ENCODE measurements at regions of chr10 and their contacts with region 1.

Region 1: DNA sequence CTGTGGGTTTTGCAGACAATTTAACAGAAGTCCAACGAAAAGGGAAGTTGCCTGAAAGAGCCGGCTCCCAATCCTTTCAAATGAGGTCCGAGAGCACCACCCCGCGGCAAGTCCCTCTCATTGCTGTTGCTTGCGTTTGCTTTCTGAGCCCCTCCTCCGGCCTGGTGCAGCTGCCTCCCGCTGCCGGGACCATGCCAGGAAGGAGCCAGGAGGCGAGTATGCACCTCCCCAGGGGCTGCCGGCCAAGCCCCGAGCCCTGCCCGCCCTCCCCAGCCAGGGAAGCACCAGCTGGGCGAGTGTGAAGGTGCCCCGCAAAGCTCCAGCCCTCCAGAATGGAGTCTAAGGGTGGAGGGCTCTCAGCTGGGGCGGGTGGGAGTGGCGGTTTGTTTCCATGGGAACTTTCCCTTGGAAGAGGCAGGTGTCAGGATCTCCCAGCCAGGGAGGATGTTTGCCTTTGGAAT is 25.8 kb upstream of the PPP2R2D start:
- DNase-seq: peak; percentile 80 to 86
- H3K4me3 ChIP-seq: peak overlapping the region; percentile 18; the same call in 1 of the 2 replicates
- H3K4me3 Mint-ChIP-seq: no peak overlapping the region
- H3K27ac Mint-ChIP-seq: no peak overlapping the region
- H3K4me1 ChIP-seq: no peaks in the 10 kb centered on the region
- H3K4me1 Mint-ChIP-seq: peaks cover 5% of the 10 kb centered on the region
- H3K27me3 ChIP-seq: no peaks in the 10 kb centered on the region
- H3K27me3 Mint-ChIP-seq: peaks cover 18% of the 10 kb centered on the region
- CTCF ChIP-seq: peak; percentile 92 to 94

Region 2: GRCh38 chr10:130190055-130190736 is 1684.8 kb before region 1 on chr10:
- CTCF ChIA-PET with region 1: interaction called, 3 read pairs
- POLR2A ChIA-PET with region 1: no interaction called
- intact Hi-C with region 1: loop called (anchors 1 kb)
- DNase-seq: peak; percentile 84 to 94
- H3K4me3 ChIP-seq: peak overlapping the region; percentile 86
- H3K4me3 Mint-ChIP-seq: peak overlapping the region; percentile 60
- H3K27ac Mint-ChIP-seq: no peak overlapping the region
- H3K4me1 ChIP-seq: no peaks in the 10 kb centered on the region
- H3K4me1 Mint-ChIP-seq: no peaks in the 10 kb centered on the region
- H3K27me3 ChIP-seq: no peaks in the 10 kb centered on the region
- H3K27me3 Mint-ChIP-seq: no peaks in the 10 kb centered on the region
- CTCF ChIP-seq: peak; percentile 92 to 99

Region 3: GRCh38 chr10:131453594-131454355 is 421.2 kb before region 1 on chr10:
- CTCF ChIA-PET with region 1: no interaction called
- POLR2A ChIA-PET with region 1: no interaction called
- intact Hi-C with region 1: loop called (anchors 10 kb)
- DNase-seq: peak in 1 of 2 experiments; percentile 29
- H3K4me3 ChIP-seq: no peak overlapping the region
- H3K4me3 Mint-ChIP-seq: no peak overlapping the region
- H3K27ac Mint-ChIP-seq: no peak overlapping the region
- H3K4me1 ChIP-seq: no peaks in the 10 kb centered on the region
- H3K4me1 Mint-ChIP-seq: no peaks in the 10 kb centered on the region
- H3K27me3 ChIP-seq: no peaks in the 10 kb centered on the region; the same call in 1 of the 2 replicates
- H3K27me3 Mint-ChIP-seq: peaks cover 12% of the 10 kb centered on the region
- CTCF ChIP-seq: peak; percentile 11 to 68

Region 4: DNA sequence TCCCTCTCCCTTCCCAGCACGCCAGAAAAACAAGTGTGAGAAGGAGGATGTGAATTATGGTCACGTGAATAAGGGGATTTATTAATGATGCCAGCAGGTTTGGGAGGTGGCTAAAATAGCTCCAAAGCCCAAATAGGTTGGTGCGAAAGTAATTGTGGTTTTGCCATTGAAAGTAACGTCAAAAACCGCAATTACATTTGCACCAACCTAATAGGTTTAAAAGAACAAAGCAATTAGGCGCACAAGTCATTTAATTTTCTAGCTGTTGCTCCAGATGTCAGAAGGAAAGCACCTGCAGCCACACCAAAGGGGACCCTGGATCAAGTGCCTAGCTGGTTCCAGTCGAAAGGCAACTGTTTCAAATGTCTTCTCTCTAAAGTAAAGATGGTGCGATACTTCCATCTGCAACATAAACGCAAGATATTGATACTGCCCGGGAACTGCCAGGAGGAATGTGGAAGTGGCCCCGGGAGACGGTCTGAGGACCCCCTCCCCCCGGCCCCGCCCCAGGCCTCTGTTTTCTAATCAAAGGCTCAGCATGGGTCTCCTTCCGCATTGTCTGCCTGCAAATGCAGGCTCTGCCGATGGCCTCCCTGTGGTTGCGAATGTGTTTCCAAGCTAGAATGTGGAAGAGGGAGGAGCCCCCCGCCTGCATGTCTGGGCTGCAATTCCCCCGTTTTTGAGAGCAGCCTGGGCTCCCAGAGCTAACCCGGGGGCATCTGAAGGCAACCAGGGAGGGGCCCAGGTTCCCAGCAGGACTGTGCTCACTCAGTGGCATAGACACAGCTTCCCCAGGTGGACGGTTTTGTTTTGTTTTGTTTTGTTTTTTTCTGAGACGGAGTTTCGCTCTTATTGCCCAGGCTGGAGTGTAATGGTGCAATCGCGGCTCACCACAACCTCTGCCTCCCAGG is 198.3 kb before region 1 on chr10:
- CTCF ChIA-PET with region 1: no interaction called
- POLR2A ChIA-PET with region 1: no interaction called
- intact Hi-C with region 1: no loop called
- DNase-seq: no peak
- H3K4me3 ChIP-seq: no peak overlapping the region
- H3K4me3 Mint-ChIP-seq: no peak overlapping the region
- H3K27ac Mint-ChIP-seq: no peak overlapping the region
- H3K4me1 ChIP-seq: no peaks in the 10 kb centered on the region
- H3K4me1 Mint-ChIP-seq: no peaks in the 10 kb centered on the region
- H3K27me3 ChIP-seq: no peaks in the 10 kb centered on the region
- H3K27me3 Mint-ChIP-seq: peaks cover 7% of the 10 kb centered on the region
- CTCF ChIP-seq: no peak

Region 5: DNA sequence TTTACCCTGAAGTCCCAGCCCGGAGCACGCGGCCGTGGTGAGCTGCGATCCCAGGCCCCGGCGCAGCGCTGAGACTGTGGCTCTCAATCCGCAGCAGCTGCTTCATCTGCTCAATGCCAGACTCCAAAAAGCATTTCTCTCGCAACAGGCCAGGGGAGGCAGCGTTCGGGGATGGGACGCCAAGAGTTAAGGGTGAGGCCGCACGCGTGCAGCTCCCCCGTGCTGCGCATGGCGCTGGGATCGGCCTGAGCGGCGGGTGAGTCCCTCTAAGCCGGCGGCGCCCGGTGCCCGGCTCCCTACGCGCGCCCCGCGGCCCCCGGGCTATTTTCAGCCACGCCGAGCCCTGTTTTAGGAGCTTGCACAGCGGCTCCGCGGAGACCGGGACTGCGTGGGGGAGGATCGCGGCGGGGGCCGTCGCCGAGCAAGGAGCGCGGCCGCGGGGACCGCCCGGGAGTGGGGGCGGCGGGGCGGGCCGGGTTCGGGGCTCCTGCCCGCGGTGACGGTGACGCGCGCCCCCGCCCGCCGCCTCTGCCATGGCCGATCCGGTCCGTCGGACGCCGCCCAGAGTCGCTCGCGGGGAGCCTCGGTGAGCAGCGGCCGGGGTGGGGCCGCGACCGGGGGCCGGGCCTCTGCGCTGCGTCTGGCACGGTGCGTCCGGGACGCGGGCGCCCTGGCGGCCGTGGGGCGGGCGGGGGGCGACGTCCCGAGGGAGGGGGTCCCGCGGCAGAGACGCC is 161.3 kb after region 1 on chr10:
- CTCF ChIA-PET with region 1: no interaction called
- POLR2A ChIA-PET with region 1: no interaction called
- intact Hi-C with region 1: no loop called
- DNase-seq: peak in 1 of 2 experiments; percentile 48
- H3K4me3 ChIP-seq: peak overlapping the region; percentile 38
- H3K4me3 Mint-ChIP-seq: peak overlapping the region; percentile 66
- H3K27ac Mint-ChIP-seq: no peak overlapping the region
- H3K4me1 ChIP-seq: no peaks in the 10 kb centered on the region
- H3K4me1 Mint-ChIP-seq: peaks cover 5% of the 10 kb centered on the region
- H3K27me3 ChIP-seq: no peaks in the 10 kb centered on the region; the same call in 1 of the 2 replicates
- H3K27me3 Mint-ChIP-seq: peaks cover 30% of the 10 kb centered on the region
- CTCF ChIP-seq: no peak